Right ventricle myocardium inferior (tissue), 1 donor: ENCODE measurements at regions of chr11 and their contacts with region 1.

Region 1: GRCh38 chr11:112033156-112033555 is 7.9 kb downstream of the DLAT start:
- DNase-seq: no peak
- ATAC-seq: no peak

Region 2: DNA sequence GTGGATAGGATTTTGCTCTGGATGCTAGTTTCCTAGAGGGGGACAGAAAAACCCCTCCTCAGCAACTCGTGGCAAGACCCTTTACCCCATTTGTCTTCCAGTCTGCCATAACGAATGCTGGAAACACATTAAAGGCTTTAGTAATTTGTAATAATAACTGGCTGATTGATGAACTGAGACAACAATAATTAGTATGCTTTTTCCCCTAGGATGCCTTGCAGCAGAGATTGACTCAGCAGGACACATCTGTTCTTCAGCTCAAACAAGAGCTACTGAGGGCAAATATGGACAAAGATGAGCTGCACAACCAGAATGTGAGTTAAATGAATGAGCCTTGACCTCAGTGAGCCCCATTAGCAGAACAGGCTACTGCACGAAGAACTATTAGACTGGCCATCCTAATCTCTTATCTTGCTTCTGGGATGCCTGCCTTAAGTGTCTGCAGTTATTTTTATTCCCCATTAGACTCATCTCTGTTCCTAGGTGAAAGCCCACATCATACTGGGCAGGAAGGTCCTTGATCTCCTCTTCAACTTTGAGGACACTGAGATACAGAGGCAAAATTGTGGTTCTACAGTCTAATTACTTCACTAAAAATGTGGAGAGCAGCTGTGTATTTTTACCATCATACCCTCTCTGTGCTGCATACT is 40.8 kb before region 1 on chr11:
- intact Hi-C with region 1: no loop called
- DNase-seq: no peak
- ATAC-seq: peak; percentile 58

Region 3: DNA sequence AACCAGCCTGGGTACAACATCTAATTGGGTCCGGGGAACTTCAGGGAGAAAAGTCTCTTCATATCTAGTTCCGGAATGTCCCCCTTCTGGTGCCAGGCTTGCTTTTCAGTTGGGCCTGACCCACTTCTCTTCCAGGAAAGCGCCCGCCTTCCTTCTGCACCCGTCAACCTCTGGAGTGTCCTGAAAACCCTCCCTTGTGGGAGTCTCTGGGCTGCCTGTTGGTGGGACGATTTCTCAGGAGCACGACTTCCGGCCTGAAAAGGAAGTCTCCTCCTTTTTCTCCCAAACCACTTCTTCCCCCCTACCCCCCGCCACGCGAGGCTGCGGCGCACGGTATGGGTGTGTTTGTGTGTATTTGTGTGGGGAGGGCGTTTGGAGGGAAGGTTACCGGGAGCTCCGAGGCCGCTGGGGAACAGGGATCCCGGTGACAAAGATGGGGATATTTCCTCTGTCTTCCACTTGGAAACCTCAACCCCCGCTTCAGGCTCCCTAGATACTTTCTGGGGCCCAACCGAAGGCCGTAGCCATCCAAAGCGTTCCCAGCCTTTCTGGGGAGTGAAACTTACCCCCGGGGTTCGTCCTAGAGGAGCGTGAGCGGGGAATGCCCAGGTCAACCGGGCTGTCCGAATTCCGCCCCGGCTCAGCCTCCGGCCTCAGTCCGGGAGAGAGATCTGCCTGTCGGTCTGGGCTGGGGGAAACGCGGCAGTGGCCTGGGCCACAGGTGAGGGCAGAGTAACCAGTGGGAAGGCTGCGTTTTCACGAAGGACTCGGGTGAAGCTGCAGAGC is 41.1 kb after region 1 on chr11 and contains the start of gene NKAPD1:
- intact Hi-C with region 1: loop called (anchors 5 kb)
- DNase-seq: peak; percentile 85
- ATAC-seq: peak; percentile 90
- total RNA-seq, gene NKAPD1: 8.1 TPM

Region 4: DNA sequence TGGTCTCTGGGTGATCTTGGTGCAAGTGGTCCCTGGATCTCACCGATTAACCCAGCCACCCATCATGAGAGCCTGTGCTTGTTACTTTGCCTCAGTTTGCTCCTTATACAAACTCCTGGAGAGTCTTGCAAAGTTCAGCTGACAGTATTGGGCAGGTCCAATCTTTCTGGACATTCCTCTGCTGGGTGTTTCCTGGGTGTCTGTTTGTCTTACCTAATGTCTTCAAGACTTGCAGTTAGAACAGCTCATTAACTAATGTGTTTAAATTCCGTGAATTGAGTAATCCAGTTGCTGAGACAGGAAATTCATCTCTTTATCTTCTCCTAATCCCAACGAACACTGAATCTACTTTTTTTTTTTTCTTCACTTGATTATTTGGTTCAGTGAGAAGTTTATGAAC is 162.8 kb after region 1 on chr11:
- intact Hi-C with region 1: no loop called
- DNase-seq: no peak
- ATAC-seq: no peak